HCT116 (cell line): ENCODE measurements at regions of chr10 and their contacts with region 1.

Region 1: DNA sequence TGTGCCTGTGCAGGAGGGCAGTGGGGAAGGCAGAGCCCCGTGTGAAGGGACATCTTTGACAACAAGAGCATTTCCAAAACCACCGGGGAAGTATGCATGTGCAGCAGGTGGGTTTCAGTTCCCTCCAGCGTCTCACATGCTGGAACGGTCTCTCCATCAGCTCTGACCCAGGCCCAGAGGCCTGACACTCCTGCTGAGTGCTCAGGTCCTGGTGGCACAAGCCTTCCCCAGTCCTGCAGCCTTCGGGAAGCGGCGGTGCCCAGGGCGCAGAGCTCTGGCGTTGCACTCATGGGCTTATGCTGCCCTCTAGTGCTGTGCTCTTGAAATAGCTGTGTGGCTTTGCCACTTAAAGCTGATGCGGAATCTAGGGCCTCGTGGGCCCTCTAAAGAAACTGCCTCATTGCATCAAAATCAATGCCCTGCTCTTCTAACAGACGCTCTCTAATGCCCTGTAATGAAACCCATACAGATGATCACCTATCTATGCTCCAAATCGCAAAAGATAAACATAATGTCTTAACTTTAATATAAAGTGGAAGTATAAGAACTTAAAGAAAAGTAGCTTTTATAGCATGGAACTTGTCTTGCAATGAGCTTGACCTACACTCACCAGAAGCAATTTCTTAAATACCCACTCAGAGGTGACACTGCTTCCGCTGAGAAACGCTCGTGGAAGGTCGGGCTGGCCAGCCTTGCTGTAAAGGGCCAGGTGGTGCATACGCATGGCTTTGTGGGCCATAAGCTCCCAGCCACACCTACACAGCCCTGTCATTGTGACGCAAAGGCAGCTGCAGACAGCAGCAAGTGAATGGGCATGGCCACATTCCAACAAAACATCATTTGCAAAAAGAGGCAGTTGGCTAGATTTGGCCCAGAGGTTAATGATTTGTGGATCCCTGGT is 38.6 kb downstream of the CLRN3 start:
- DNase-seq: peak; percentile 75
- ATAC-seq: peak; percentile 97
- H3K4me3 ChIP-seq: no peak overlapping the region
- H3K27ac ChIP-seq: no peak overlapping the region
- H3K4me1 ChIP-seq: no peaks in the 10 kb centered on the region
- H3K27me3 ChIP-seq: 0 out of 2 replicates have a peak, but pooled peaks cover 2% of the 10 kb centered on the region
- CTCF ChIP-seq: peak; percentile 88 to 96 (median 91)
- POLR2A ChIP-seq: no peak
- RAD21 ChIP-seq: peak; percentile 99

Region 2: GRCh38 chr10:127243490-127244272 is 610.4 kb before region 1 on chr10:
- CTCF ChIA-PET with region 1: interaction called, 4 read pairs
- POLR2A ChIA-PET with region 1: no interaction called
- RAD21 ChIA-PET with region 1: no interaction called
- intact Hi-C with region 1: loop called (anchors 10 kb)
- DNase-seq: peak; percentile 39
- ATAC-seq: peak; percentile 98
- H3K4me3 ChIP-seq: no peak overlapping the region
- H3K27ac ChIP-seq: no peak overlapping the region
- H3K4me1 ChIP-seq: no peaks in the 10 kb centered on the region
- H3K27me3 ChIP-seq: no peaks in the 10 kb centered on the region
- CTCF ChIP-seq: peak; percentile 55 to 96 (median 89); a peak in 5 of 6 replicates
- POLR2A ChIP-seq: no peak
- RAD21 ChIP-seq: peak; percentile 57

Region 3: DNA sequence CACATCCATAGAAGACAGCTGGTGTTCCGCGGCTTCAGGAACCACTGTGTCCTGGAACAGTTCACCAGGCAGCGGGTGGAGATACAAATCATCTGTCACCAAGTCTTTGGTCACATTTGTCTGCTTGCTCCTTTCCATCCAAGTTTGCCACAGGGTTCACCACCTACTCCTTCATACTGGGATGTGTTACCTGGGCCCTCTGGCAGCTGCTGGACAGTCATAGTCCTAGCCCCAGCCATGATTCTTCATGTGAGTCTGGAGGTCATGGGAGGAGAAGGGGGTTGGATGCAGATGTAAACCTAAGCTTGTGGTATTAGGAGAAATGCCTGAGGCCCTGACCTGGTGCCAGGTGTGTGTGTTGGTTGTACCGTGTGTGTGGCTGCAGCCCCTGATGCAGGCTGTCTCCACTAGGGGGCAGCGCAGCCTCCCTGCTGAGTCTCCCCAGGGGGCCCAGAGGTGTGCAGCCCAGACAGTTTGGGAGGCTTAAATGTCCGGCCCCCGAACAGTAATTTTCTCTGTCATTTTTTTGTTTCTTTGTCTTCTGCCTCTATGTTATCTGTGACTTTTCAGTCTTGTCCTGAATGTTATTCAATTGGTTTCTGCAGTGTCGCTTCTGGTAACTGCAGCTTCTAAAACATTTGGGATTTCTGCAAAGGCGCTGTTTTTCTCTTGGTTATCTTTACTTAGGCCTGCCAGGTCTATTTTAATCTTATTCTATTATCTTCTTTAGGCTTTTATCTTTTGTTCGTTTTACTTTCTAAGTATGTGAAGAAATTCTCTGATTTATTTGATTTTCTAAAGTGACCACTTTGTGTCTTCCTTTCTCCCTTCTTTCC is 290.2 kb before region 1 on chr10:
- CTCF ChIA-PET with region 1: interaction called, 16 read pairs
- POLR2A ChIA-PET with region 1: no interaction called
- RAD21 ChIA-PET with region 1: no interaction called
- intact Hi-C with region 1: loop called (anchors 1 kb)
- DNase-seq: peak; percentile 24
- ATAC-seq: peak; percentile 87
- H3K4me3 ChIP-seq: no peak overlapping the region
- H3K27ac ChIP-seq: no peak overlapping the region
- H3K4me1 ChIP-seq: no peaks in the 10 kb centered on the region
- H3K27me3 ChIP-seq: peaks cover 52% of the 10 kb centered on the region
- CTCF ChIP-seq: peak; percentile 55 to 99 (median 98); a peak in 5 of 6 replicates
- POLR2A ChIP-seq: no peak
- RAD21 ChIP-seq: peak; percentile 51

Region 4: DNA sequence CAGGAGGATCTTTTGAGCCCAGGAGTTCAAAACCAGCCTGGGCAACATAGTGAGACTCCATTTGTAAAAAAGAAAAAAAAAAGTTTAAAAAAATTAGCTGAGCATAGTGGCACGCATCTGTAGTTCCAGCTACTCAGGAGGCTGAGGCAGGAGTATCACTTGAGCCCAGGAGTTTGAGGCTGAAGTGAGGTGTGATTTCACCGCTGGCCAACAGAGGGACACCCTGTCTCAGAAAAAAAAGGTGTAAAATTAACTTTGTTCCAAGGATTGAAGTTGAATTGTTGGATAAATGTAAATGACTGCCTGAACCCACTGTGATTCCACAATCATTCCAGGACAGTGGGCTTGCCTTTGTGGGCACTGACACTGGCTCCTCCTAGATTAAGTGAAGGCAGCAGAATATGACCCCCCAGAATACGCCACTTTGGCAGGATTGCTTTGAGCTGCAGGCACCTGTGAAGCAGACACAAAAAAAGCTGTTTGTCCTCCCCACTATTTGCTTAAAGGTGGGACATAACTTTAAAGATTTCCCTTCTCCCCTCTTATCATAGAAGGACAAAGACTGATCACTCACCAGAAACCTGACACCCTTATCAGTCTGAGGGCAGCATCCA is 174.4 kb before region 1 on chr10:
- CTCF ChIA-PET with region 1: interaction called, 19 read pairs
- POLR2A ChIA-PET with region 1: no interaction called
- RAD21 ChIA-PET with region 1: interaction called, 6 read pairs
- intact Hi-C with region 1: loop called (anchors 1 kb)
- DNase-seq: peak; percentile 12
- ATAC-seq: peak; percentile 77
- H3K4me3 ChIP-seq: no peak overlapping the region
- H3K27ac ChIP-seq: no peak overlapping the region
- H3K4me1 ChIP-seq: no peaks in the 10 kb centered on the region
- H3K27me3 ChIP-seq: peaks cover 38% of the 10 kb centered on the region
- CTCF ChIP-seq: peak; percentile 27 to 74 (median 71); a peak in 5 of 6 replicates
- POLR2A ChIP-seq: no peak
- RAD21 ChIP-seq: peak; percentile 57

Region 5: GRCh38 chr10:127702271-127702670 is 151.8 kb before region 1 on chr10:
- CTCF ChIA-PET with region 1: no interaction called
- POLR2A ChIA-PET with region 1: no interaction called
- RAD21 ChIA-PET with region 1: no interaction called
- intact Hi-C with region 1: no loop called
- DNase-seq: no peak
- ATAC-seq: no peak
- H3K4me3 ChIP-seq: no peak overlapping the region
- H3K27ac ChIP-seq: no peak overlapping the region
- H3K4me1 ChIP-seq: no peaks in the 10 kb centered on the region
- H3K27me3 ChIP-seq: peaks cover 60% of the 10 kb centered on the region
- CTCF ChIP-seq: no peak
- POLR2A ChIP-seq: no peak
- RAD21 ChIP-seq: no peak

Region 6: DNA sequence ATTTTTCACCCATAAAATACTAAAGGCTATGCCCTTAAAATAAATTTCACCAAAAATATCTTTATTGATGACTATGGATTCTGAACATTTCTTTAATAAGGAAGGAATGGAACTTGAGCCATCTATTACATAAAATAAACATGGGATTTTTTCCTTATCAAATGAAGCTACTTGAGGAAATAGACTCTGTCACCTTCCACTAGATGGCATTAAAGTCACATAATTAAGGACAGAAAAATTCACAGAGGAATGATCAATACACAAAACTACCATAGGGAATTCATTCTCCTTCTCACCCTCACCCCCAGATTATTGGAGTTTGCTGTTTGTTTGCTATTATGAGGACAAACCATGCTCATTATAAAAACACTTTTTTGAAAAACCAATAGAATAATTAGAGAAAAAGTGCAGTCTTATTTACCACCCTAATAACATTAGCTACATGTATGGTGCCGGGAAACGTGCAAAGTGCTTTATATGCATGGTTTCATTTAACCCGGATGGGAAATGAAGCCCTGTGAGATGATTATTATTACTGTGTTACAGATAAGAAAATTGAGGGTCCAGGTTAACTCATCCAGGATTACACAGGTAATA is 138.2 kb before region 1 on chr10:
- CTCF ChIA-PET with region 1: interaction called, 131 read pairs
- POLR2A ChIA-PET with region 1: no interaction called
- RAD21 ChIA-PET with region 1: interaction called, 25 to 31 read pairs
- intact Hi-C with region 1: loop called (anchors 1 kb)
- DNase-seq: peak; percentile 46
- ATAC-seq: peak; percentile 68
- H3K4me3 ChIP-seq: no peak overlapping the region
- H3K27ac ChIP-seq: no peak overlapping the region
- H3K4me1 ChIP-seq: no peaks in the 10 kb centered on the region
- H3K27me3 ChIP-seq: peaks cover 36% of the 10 kb centered on the region
- CTCF ChIP-seq: peak; percentile 41 to 73 (median 65); a peak in 5 of 6 replicates
- POLR2A ChIP-seq: no peak
- RAD21 ChIP-seq: peak; percentile 78

Region 7: DNA sequence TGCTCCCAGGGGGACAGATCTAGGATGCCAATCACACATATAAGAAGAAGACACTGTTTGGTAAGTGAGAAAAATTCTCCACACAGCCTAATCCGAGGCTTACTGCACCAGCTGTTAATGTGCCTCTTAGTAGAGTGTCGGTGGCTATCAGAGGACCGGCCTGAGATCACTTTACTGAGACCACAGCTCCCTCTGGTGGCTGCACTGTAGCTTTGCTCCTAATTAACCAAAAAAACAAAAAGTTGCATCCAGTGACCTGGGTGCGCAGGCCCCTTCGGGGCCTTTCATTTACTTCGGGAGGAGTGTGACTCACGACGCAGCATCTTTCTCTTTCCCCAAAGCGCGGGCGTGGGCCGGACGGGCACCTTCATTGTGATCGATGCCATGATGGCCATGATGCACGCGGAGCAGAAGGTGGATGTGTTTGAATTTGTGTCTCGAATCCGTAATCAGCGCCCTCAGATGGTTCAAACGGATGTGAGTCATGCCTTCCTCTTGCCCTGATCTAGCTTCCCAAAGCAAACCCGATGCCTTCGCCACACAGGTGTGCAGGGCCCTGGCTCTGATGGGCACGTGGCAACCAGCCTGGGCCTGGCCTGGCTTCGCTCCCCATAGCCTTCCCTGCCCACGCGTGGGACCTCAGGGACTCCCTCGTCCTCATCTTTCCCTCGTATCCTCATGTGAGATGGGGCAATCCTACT is 215.4 kb after region 1 on chr10:
- CTCF ChIA-PET with region 1: interaction called, 30 read pairs
- POLR2A ChIA-PET with region 1: no interaction called
- RAD21 ChIA-PET with region 1: interaction called, 3 to 4 read pairs
- intact Hi-C with region 1: loop called (anchors 2 kb)
- DNase-seq: peak; percentile 57
- ATAC-seq: peak; percentile 88
- H3K4me3 ChIP-seq: no peak overlapping the region
- H3K27ac ChIP-seq: no peak overlapping the region
- H3K4me1 ChIP-seq: peaks cover 0 to 6% of the 10 kb centered on the region in 2 experiments; a peak in 1 of 4 replicates
- H3K27me3 ChIP-seq: no peaks in the 10 kb centered on the region
- CTCF ChIP-seq: peak; percentile 73 to 95 (median 91)
- POLR2A ChIP-seq: no peak
- RAD21 ChIP-seq: peak; percentile 98

Region 8: DNA sequence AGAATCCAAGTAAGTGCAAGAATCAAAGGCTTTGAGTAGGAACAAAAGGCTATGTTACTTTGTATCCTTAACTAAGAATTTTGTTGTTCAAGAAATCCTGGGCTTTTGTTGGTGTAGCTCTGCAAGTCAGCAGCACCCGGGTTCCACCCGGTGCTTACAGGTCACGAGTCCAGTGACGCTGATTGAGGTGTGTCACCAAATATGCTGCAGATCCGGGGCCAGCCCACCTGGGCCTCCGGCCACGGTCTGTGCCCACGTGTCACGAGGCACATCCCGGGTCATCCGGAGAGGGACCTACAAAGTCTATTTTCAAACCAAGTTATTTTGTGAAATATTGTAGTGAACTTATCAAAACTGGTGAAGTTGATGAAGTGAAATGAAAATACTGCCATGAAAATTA is 1716.1 kb after region 1 on chr10:
- CTCF ChIA-PET with region 1: no interaction called
- POLR2A ChIA-PET with region 1: no interaction called
- RAD21 ChIA-PET with region 1: no interaction called
- intact Hi-C with region 1: no loop called
- DNase-seq: no peak
- ATAC-seq: no peak
- H3K4me3 ChIP-seq: no peak overlapping the region
- H3K27ac ChIP-seq: no peak overlapping the region
- H3K4me1 ChIP-seq: no peaks in the 10 kb centered on the region
- H3K27me3 ChIP-seq: no peaks in the 10 kb centered on the region
- CTCF ChIP-seq: no peak
- POLR2A ChIP-seq: no peak
- RAD21 ChIP-seq: no peak